Activated B cell treated with CpG ODN at 0.5 μM for 24 hours (primary cell): ENCODE measurements at regions of chr3 and their contacts with region 1.

Region 1: GRCh38 chr3:98563661-98564281 is 29.6 kb downstream of the CPOX start:
- DNase-seq: no peak
- ATAC-seq: peak; percentile 60
- H3K4me3 Mint-ChIP-seq: no peak overlapping the region
- H3K27ac Mint-ChIP-seq: peak overlapping the region; percentile 54
- H3K4me1 Mint-ChIP-seq: peaks cover 42% of the 10 kb centered on the region
- H3K27me3 Mint-ChIP-seq: no peaks in the 10 kb centered on the region
- CTCF ChIP-seq: no peak

Region 2: DNA sequence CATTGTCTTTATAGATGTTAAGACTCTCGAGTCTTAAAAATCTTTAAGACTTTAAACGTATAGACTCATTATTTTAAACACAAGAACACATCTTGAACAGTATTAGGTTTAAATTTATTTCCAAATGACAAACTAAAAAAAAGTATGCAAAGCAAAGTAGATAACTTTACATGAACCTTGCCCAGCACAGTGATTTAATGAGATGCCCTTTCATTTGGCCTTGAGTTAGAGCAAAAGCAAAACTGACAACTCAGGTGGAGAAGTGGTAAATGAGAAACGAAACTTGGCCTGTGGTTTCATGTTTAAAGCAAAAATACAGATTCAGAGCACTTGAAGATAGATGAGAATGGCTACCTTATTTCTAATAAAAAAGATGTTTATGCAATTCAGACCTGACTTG is 23.4 kb before region 1 on chr3:
- CTCF ChIA-PET with region 1: no interaction called
- POLR2A ChIA-PET with region 1: interaction called, 57 read pairs
- intact Hi-C with region 1: no loop called
- DNase-seq: no peak
- ATAC-seq: peak; percentile 67
- H3K4me3 Mint-ChIP-seq: no peak overlapping the region
- H3K27ac Mint-ChIP-seq: peak overlapping the region; percentile 25
- H3K4me1 Mint-ChIP-seq: peaks cover 23% of the 10 kb centered on the region
- H3K27me3 Mint-ChIP-seq: no peaks in the 10 kb centered on the region
- CTCF ChIP-seq: no peak